CD4-positive, alpha-beta memory T cell (primary cell): ENCODE measurements at regions of chr17 and their contacts with region 1.

Region 1: GRCh38 chr17:64145757-64146417 is 15.9 kb upstream of the ERN1 start:
- DNase-seq: peak; percentile 95 to 99 (median 97)
- H3K4me3 ChIP-seq: peak overlapping the region; percentile 77 to 95
- H3K4me3 Mint-ChIP-seq: no peak overlapping the region
- H3K27ac ChIP-seq: peak overlapping the region; percentile 87
- H3K27ac Mint-ChIP-seq: no peak overlapping the region
- H3K4me1 ChIP-seq: peaks cover 22% of the 10 kb centered on the region
- H3K4me1 Mint-ChIP-seq: peaks cover 15 to 30% (median 21%) of the 10 kb centered on the region in 4 donors
- H3K27me3 ChIP-seq: no peaks in the 10 kb centered on the region
- H3K27me3 Mint-ChIP-seq: no peaks in the 10 kb centered on the region

Region 2: DNA sequence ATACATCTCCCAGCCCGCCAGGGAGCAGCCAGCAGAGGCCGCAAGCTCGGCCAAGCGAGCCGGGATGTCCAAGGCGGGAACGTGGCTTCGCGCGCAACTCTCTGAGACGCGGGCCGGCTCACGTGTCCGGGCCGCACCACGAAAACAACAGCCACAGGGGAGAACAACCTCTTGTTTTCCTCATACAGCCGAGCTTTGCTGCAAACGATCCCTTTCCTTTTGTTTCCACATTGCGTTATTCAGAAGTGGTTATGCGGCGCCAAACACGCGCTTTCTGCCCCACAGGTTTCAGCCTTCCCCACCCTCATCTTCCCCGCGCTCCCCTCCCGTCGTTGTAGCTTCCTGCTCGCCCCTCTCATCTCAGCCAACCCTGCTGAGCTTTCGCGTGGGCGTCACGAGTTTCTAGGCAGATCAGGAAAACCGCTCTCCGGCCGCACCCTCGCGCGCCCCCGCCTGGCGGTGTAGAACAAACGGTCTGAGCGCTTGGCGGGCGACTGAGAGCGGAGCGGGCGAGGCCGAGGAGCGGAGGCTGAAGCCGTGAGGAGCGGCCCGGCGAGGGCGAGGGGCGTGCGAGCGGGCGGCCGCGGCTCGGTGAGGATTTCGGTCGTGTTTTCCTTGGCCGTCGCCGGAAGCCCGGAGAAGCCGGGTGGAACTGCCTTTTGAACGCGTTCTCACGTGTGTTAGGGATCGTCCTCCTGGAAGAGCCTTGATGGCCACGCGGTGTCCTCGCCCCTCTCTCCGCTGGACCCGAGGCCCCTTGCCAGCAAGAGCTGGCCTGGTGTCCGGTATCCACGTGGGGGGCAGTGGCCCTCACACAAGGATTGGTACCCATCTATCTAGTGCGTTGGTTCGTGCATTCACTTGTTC is 296.8 kb before region 1 on chr17:
- CTCF ChIA-PET with region 1: no interaction called
- POLR2A ChIA-PET with region 1: interaction called, 14 read pairs
- intact Hi-C with region 1: no loop called
- DNase-seq: peak; percentile 92 to 94 (median 93)
- H3K4me3 ChIP-seq: peak overlapping the region; percentile 45 to 58
- H3K4me3 Mint-ChIP-seq: peak overlapping the region; percentile 78 to 94 (median 89)
- H3K27ac ChIP-seq: peak overlapping the region; percentile 18
- H3K27ac Mint-ChIP-seq: peak overlapping the region; percentile 72 to 100 (median 98)
- H3K4me1 ChIP-seq: peaks cover 13% of the 10 kb centered on the region
- H3K4me1 Mint-ChIP-seq: peaks cover 13 to 22% (median 18%) of the 10 kb centered on the region in 4 donors
- H3K27me3 ChIP-seq: no peaks in the 10 kb centered on the region
- H3K27me3 Mint-ChIP-seq: no peaks in the 10 kb centered on the region

Region 3: DNA sequence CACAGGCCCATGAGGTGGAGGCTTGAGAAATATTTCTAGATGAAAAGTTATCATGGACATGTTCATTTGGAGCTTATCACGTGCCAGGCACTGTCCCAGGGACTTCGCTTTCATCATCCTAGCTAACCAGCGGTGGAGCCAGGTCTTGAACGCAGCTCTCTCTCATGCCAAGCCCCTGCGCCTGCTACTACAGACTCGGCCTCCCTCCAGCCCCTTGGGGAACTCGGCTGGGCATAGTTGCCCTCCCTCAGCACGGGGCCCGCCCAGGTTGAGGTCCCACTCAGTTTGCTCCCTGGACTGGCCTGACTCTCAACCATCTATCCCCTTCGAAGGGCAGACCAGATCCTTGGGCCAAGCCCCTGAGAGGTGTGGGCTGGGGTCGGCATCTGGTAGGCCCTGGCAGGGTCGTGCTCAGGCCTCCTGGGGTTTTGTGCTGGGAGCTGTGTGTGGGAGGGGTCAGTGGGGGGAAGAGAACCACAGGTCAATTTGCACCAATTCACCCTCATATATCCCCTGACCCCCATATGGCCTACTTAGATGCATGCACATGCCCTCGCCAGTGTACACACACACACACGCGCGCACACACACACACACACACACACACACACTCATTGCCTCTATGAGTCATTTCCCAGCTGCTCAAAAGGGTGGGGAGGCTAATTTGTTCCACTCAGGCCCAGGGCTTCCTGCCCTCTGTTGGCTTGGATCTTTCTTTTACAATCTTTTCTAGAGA is 161.1 kb before region 1 on chr17:
- CTCF ChIA-PET with region 1: no interaction called
- POLR2A ChIA-PET with region 1: interaction called, 15 read pairs
- intact Hi-C with region 1: no loop called
- DNase-seq: peak; percentile 46 to 86 (median 70)
- H3K4me3 ChIP-seq: no peak overlapping the region
- H3K4me3 Mint-ChIP-seq: peak overlapping the region in 5 of 8 donors; percentile 10 to 86 (median 47)
- H3K27ac ChIP-seq: no peak overlapping the region
- H3K27ac Mint-ChIP-seq: peak overlapping the region; percentile 61 to 98 (median 87)
- H3K4me1 ChIP-seq: peaks cover 18% of the 10 kb centered on the region
- H3K4me1 Mint-ChIP-seq: peaks cover 16 to 29% (median 19%) of the 10 kb centered on the region in 4 donors
- H3K27me3 ChIP-seq: no peaks in the 10 kb centered on the region
- H3K27me3 Mint-ChIP-seq: peaks cover 0 to 2% of the 10 kb centered on the region in 2 donors

Region 4: GRCh38 chr17:64005734-64006167 is 140.1 kb before region 1 on chr17:
- CTCF ChIA-PET with region 1: no interaction called
- POLR2A ChIA-PET with region 1: no interaction called
- intact Hi-C with region 1: no loop called
- DNase-seq: no peak
- H3K4me3 ChIP-seq: no peak overlapping the region
- H3K4me3 Mint-ChIP-seq: no peak overlapping the region
- H3K27ac ChIP-seq: no peak overlapping the region
- H3K27ac Mint-ChIP-seq: peak overlapping the region in 6 of 7 donors; percentile 69 to 92 (median 83)
- H3K4me1 ChIP-seq: peaks cover 54% of the 10 kb centered on the region
- H3K4me1 Mint-ChIP-seq: peaks cover 23 to 56% (median 38%) of the 10 kb centered on the region in 4 donors
- H3K27me3 ChIP-seq: no peaks in the 10 kb centered on the region
- H3K27me3 Mint-ChIP-seq: no peaks in the 10 kb centered on the region

Region 5: GRCh38 chr17:64051153-64051552 is 94.7 kb before region 1 on chr17:
- CTCF ChIA-PET with region 1: interaction called, 3 read pairs
- POLR2A ChIA-PET with region 1: interaction called, 35 read pairs
- intact Hi-C with region 1: no loop called
- DNase-seq: peak; percentile 50 to 84 (median 73)
- H3K4me3 ChIP-seq: no peak overlapping the region
- H3K4me3 Mint-ChIP-seq: peak overlapping the region in 7 of 8 donors; percentile 37 to 78 (median 68)
- H3K27ac ChIP-seq: peak overlapping the region; percentile 52
- H3K27ac Mint-ChIP-seq: peak overlapping the region; percentile 69 to 96 (median 91)
- H3K4me1 ChIP-seq: peaks cover 56% of the 10 kb centered on the region
- H3K4me1 Mint-ChIP-seq: peaks cover 35 to 76% (median 54%) of the 10 kb centered on the region in 4 donors
- H3K27me3 ChIP-seq: no peaks in the 10 kb centered on the region
- H3K27me3 Mint-ChIP-seq: no peaks in the 10 kb centered on the region

Region 6: DNA sequence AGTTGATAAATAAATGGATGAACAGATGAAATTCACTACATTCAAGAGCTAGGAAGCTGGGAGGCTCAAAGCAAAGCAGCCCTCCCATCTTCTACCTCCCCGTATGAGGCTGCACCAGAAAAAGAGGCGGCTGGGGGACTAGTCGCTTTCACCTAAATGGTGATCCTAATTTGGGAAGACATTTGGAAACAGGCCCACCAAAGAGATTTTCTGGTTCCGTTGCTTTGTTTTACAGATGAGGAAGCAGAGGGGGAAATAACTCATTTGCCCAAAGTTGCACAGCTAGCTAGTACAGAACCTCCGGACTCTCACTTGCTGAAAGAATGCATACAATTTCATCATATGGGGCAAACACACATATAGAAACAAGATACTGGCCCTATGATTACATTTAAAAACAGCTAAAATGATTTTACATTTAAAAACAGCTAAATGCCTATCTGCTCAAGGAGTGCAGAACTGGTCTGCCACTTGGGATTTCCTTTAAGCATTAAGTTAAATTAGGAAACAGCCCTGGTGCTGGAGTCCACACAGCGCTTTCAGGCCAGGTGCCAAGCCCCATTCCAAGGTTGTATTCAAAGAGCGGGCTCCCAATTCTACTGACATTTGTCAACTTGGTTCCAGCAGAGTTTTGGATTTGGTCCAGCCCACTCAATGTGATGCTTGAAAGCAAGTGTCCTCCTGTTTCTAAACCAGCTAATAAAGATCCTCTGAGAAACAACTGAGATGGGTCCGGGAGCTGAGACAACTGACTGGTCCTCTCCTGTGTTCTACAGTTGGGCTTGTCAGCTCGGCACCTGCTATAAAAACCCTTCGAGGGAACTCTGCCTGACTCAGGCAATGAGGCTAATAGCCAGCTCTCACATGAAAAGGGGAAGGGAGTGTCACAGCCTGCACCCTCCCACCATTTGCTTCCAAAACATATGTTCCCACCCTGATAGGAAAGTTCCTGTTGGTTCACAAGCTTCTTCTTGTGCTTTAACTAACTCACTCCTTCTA is 27.6 kb before region 1 on chr17:
- CTCF ChIA-PET with region 1: interaction called, 5 read pairs
- POLR2A ChIA-PET with region 1: interaction called, 14 read pairs
- intact Hi-C with region 1: no loop called
- DNase-seq: no peak
- H3K4me3 ChIP-seq: no peak overlapping the region
- H3K4me3 Mint-ChIP-seq: peak overlapping the region in 3 of 8 donors; percentile 21 to 63 (median 54)
- H3K27ac ChIP-seq: no peak overlapping the region
- H3K27ac Mint-ChIP-seq: peak overlapping the region in 5 of 7 donors; percentile 10 to 71 (median 50)
- H3K4me1 ChIP-seq: peaks cover 84% of the 10 kb centered on the region
- H3K4me1 Mint-ChIP-seq: peaks cover 52 to 91% (median 69%) of the 10 kb centered on the region in 4 donors
- H3K27me3 ChIP-seq: no peaks in the 10 kb centered on the region
- H3K27me3 Mint-ChIP-seq: no peaks in the 10 kb centered on the region

Region 7: DNA sequence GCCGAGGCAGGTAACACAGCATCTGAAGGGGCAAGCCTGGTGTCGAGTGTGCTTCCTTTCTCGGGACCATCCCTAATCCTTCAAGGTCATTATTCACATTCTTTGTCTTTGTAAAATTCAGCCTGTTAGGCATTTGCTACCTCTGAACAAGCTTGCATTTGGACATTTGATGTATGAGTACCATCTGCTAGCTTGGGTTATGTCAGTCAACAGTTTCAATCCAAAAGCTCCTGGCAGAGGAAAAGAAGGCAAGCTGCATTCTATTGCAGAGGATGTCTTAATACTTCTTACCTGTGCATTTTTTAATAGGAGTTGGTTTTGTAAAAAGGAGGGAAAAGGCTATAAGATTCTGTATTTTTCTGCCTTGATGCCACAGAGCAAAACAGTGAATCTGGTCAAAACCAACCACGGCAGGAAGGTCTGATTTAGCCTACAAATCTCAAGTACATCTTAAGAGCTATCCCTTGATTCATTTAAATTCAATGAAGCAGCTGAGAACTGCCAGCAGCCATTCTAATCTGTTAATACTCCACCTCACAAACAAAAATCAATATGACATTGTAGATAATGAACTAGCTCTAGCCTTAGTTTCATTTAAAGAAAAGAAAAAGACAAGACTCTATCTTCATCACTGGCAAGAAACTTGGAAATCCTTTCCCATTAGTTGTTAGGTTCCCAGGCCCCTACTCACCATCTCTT is 78.2 kb after region 1 on chr17:
- CTCF ChIA-PET with region 1: no interaction called
- POLR2A ChIA-PET with region 1: no interaction called
- intact Hi-C with region 1: no loop called
- DNase-seq: no peak
- H3K4me3 ChIP-seq: no peak overlapping the region
- H3K4me3 Mint-ChIP-seq: no peak overlapping the region
- H3K27ac ChIP-seq: no peak overlapping the region
- H3K27ac Mint-ChIP-seq: peak overlapping the region in 2 of 7 donors; percentile 2 to 19
- H3K4me1 ChIP-seq: no peaks in the 10 kb centered on the region
- H3K4me1 Mint-ChIP-seq: peaks cover 3 to 10% (median 5%) of the 10 kb centered on the region in 4 donors
- H3K27me3 ChIP-seq: no peaks in the 10 kb centered on the region
- H3K27me3 Mint-ChIP-seq: no peaks in the 10 kb centered on the region

Region 8: DNA sequence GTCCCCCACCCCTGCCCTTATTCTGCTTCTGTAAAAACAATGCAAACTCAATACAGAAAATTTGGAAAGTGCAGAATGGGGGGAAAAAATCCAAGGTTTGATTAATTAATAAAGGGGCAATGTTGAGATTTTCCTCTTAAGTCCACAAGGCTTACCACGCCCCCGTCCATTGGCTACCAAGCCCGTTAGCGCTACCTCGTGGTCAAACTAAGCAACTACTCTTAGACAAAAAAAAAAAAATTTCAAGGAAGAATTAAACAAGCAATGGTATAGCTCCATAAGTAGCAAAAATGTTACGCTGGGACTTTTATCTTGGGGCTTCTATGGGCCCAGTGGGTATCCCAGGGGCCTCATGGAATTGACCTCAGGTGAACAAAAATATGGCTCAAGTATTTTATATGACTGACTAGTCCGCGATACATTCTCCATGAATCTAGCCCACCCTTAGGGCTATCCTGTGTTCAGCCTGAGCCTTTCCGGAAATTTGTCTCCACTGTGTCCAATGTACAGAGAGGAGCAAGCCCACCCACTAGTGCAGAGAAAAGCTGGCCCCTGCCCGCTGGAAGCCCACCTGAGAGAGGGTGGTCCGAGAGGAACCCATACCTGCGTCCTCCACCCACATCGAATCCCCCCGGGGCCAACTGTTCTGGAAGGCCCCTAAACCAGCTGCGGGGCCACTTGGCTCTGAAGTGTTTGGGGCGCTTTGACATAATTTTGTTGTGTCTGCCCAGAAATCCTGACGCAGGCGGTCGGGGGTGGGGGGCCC is 136.3 kb after region 1 on chr17:
- CTCF ChIA-PET with region 1: interaction called, 15 read pairs
- POLR2A ChIA-PET with region 1: interaction called, 6 read pairs
- intact Hi-C with region 1: loop called (anchors 2 kb)
- DNase-seq: peak; percentile 42 to 57 (median 48)
- H3K4me3 ChIP-seq: no peak overlapping the region
- H3K4me3 Mint-ChIP-seq: no peak overlapping the region
- H3K27ac ChIP-seq: no peak overlapping the region
- H3K27ac Mint-ChIP-seq: no peak overlapping the region
- H3K4me1 ChIP-seq: no peaks in the 10 kb centered on the region
- H3K4me1 Mint-ChIP-seq: peaks cover 0 to 2% (median 0%) of the 10 kb centered on the region in 4 donors
- H3K27me3 ChIP-seq: no peaks in the 10 kb centered on the region
- H3K27me3 Mint-ChIP-seq: no peaks in the 10 kb centered on the region